ENCODE measurements at regions of chr18 and their contacts with region 1.

Region 1: DNA sequence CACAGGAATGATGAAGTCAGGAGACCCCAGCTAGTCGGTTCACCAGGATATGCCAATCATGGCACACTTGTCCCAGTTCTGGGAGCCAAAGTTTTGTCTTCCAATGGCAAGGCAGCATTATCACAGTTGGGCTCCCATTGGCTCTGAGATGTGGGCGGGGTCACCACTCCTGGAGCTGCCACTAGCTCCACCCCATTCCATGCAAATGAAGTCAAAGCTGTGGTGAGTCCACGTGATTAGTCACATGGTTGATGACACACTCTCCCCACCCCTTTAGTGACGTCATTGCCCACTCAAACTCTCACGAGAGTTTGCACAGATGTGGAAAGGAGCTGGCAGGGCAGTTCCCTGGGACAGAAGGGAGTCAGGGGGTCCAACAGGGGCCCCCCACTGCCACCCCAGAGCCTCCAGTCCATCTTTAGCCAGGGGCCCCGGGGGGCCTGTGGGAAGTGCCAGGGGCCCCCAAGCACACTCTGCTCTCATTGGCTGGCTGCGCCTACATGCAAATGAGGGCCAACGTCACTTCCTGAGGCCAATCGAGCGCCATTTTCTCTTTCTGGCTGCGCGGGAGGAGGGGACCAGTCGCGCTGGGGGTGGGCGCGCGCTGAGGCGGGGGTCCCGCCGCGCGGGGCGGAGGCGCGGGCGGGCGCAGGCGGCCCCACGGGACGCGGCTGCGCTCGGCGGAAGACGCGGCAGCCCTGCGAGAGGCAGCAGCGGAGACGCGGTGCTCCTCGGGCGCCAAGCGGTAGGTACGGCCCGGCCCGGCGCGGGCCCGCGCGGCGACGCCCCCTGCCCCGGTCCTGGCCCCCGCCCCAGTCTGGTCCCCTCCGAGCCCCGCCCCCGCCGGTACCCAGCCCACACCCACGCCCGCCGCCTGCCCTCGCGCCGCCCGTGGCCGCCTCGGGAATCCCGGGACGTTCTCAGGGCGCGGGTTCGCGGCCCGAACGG is at the start of gene ADNP2:
- DNase-seq: peak; percentile 80
- H3K4me3 Mint-ChIP-seq: peak within 1 kb of the TSS; percentile 84
- H3K27ac Mint-ChIP-seq: peak within 1 kb of the TSS; percentile 82
- H3K4me1 Mint-ChIP-seq: peaks cover 34% of the 10 kb centered on the region
- H3K27me3 Mint-ChIP-seq: no peaks in the 10 kb centered on the region
- total RNA-seq, gene ADNP2: 28.1 and 28.9 TPM in 2 replicates

Region 2: GRCh38 chr18:78927156-78927555 is 1181.8 kb before region 1 on chr18:
- intact Hi-C with region 1: no loop called
- DNase-seq: no peak
- H3K4me3 Mint-ChIP-seq: no peak overlapping the region
- H3K27ac Mint-ChIP-seq: no peak overlapping the region
- H3K4me1 Mint-ChIP-seq: no peaks in the 10 kb centered on the region
- H3K27me3 Mint-ChIP-seq: no peaks in the 10 kb centered on the region

Region 3: DNA sequence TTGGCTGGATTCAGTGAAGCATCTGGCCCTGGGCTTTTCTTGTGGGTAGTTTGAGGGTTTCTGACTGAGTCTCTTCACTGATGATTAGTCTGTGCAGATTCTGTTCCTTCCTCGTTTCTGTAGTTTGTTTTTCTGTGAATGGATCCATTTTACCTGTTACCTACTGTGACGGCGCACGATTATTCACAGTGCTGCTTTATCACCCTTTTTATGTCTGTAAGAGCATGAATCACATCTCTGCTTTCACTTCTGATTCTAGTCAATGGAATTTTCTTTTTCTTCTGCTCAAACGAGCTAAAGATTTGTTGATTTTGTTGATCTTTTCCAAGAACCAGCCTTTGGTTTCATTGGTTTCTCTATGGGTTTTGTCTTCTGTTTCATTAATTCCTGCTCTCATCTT is 218.3 kb before region 1 on chr18:
- intact Hi-C with region 1: loop called (anchors 5 kb)
- DNase-seq: no peak
- H3K4me3 Mint-ChIP-seq: no peak overlapping the region
- H3K27ac Mint-ChIP-seq: peak overlapping the region; percentile 85
- H3K4me1 Mint-ChIP-seq: peaks cover 9% of the 10 kb centered on the region
- H3K27me3 Mint-ChIP-seq: no peaks in the 10 kb centered on the region

Region 4: DNA sequence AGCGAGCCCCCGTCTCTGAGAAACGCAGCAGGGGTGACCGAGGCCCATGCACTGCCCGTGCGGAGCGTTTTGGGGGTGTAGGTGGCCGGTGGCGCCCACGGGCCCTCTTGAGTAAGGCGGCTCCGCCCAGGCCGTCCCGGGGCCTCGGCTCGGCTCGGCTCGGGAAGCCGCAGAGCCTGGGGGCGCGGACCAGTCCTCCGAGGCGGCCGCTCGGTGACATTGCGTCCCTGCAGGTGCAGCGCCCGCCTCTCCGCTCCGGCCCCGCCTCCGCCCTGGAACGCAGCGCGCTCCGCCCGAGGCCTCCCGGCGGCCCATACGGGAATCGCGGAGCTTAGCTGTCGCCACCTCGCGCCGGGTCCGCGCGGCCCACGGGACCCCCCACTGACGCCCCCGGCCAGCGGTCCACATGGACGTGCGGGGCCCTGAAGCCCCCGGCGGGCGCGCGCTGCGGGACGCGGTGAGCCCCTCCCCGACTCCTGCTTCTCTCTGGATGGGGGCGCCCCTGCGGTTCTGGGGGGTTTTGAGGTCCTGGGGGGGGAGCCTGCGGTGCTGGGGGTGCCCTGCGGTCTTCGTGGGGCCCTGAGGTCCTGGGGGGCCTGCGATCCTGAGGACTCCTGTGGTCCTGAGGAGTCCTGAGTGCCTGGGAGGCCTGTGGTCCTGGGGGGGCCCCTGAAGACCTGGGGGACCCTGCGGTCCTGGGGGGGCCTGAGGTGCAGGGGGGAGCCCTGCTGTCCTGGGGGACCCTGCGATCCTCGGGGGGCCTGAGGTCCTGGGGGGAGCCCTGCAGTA is 144.5 kb before region 1 on chr18 and contains the start of gene HSBP1L1:
- intact Hi-C with region 1: loop called (anchors 5 kb)
- DNase-seq: peak; percentile 65
- H3K4me3 Mint-ChIP-seq: peak within 1 kb of the TSS; percentile 76
- H3K27ac Mint-ChIP-seq: peak within 1 kb of the TSS; percentile 75
- H3K4me1 Mint-ChIP-seq: peaks cover 40% of the 10 kb centered on the region
- H3K27me3 Mint-ChIP-seq: no peaks in the 10 kb centered on the region
- total RNA-seq, gene HSBP1L1: 12.0 and 15.5 TPM in 2 replicates

Region 5: GRCh38 chr18:79988451-79989194 is 120.4 kb before region 1 on chr18 and contains the start of gene TXNL4A:
- intact Hi-C with region 1: loop called (anchors 1 kb)
- DNase-seq: peak; percentile 80
- H3K4me3 Mint-ChIP-seq: peak within 1 kb of the TSS; percentile 96
- H3K27ac Mint-ChIP-seq: peak within 1 kb of the TSS; percentile 95
- H3K4me1 Mint-ChIP-seq: peaks cover 28% of the 10 kb centered on the region
- H3K27me3 Mint-ChIP-seq: no peaks in the 10 kb centered on the region
- total RNA-seq, gene TXNL4A: 181 and 194 TPM in 2 replicates

Region 6: DNA sequence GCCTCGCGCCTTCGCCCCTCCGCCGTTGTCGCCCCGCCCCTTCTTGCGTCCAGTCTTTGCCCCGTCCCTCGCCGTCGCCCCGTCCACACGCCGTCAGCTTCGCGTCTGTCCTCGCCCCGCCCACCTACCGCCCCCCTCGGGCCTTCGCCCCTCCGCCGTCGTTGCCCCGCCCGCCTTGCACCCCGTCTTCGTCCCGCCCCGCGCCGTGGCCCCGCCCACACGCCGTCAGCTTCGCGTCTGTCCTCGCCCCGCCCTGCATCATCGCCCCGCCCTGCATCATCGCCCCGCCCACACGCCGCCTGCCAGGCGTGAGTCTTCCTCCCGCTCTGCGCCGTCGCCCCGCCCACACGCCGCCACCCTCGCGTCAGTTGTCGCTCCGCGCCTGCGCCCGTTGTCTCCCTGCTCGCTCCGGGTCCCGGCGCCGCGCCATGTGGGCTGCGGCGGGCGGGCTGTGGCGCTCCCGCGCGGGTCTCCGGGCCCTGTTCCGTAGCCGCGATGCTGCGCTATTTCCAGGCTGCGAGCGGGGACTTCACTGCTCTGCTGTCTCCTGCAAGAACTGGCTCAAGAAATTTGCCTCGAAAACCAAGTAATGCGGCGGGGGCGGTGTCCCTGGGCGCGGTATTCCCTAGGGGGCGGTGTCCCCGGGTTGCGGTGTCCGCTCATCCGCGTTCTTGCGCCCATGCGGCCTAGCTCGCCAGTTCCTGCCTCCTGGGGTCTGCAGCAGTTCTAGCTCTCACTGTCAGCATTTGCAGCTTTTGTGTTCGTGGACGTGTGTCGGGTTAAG is 74.7 kb before region 1 on chr18 and contains the start of gene RBFA:
- intact Hi-C with region 1: loop called (anchors 1 kb)
- DNase-seq: peak; percentile 98
- H3K4me3 Mint-ChIP-seq: peak within 1 kb of the TSS; percentile 78
- H3K27ac Mint-ChIP-seq: peak within 1 kb of the TSS; percentile 91
- H3K4me1 Mint-ChIP-seq: peaks cover 28% of the 10 kb centered on the region
- H3K27me3 Mint-ChIP-seq: no peaks in the 10 kb centered on the region
- total RNA-seq, gene RBFA: 48.4 and 49.4 TPM in 2 replicates

Measured in activated T-helper 2 cell treated with anti-CD3 and anti-CD28 coated beads, Interferon-gamma antibody, Interleukin-2, Interleukin-4, amounts not matched to agents 10 μg/mL and 5 μg/mL and 100 μg/mL, durations not matched to agents 14 hours and 24 hours and 36 hours (primary cell).